ENCODE measurements at regions of chr19 and their contacts with region 1.

Region 1: DNA sequence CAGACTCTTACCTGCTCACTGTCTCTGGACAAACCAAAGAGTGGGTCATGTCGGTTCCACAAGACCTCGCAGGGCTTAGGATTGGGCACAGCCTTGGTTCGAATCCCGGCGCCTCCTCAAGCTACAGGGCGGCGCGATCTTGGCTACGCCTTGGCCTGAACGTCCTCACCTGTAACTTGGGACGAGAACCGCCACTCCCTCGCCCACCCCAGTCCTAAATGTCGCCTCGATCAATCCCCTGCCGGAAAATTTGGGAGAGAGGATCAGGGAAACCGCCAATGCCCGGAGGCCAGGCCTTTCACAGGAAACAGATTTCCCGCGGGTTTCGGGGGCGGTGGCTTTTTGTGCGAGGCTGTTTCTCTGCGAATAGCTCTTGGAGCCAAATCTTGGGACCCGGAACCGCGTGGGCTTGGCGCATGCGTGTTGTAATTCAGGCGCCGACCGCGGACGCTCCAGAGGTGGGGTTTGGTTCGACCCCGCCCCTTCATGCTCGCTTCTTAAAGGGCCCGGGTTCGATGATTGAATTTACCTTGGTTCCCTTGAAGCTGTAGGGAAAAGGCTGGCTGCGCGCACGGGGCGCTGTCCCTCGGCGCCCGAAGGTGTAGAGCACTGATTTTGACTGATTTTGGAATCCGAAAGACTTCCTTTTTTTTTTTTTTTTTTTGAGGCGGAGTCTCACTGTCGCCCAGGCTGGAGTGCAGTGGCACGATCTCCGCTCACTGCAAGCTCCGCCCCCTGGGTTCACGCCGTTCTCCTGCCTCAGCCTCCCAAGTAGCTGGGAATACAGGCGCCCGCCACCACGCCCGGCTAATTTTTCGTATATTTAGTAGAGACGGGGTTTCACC is at the start of gene NR2C2AP:
- DNase-seq: peak; percentile 94
- H3K4me3 Mint-ChIP-seq: peak within 1 kb of the TSS; percentile 96
- H3K27ac Mint-ChIP-seq: peak within 1 kb of the TSS; percentile 94
- H3K4me1 Mint-ChIP-seq: peaks cover 45% of the 10 kb centered on the region
- H3K27me3 Mint-ChIP-seq: no peaks in the 10 kb centered on the region
- total RNA-seq, gene NR2C2AP: 29.9 to 37.2 TPM

Region 2: GRCh38 chr19:19192078-19192882 is 11.0 kb before region 1 on chr19 and contains the starts of genes BORCS8 and RFXANK:
- CTCF ChIA-PET with region 1: interaction called, 4 read pairs
- POLR2A ChIA-PET with region 1: interaction called, 10 read pairs
- DNase-seq: peak; percentile 100
- H3K4me3 Mint-ChIP-seq: peak within 1 kb of the TSS; percentile 96
- H3K27ac Mint-ChIP-seq: peak within 1 kb of the TSS; percentile 100
- H3K4me1 Mint-ChIP-seq: peaks cover 41% of the 10 kb centered on the region
- H3K27me3 Mint-ChIP-seq: no peaks in the 10 kb centered on the region
- total RNA-seq, gene BORCS8: 34.2 to 35.8 TPM
- total RNA-seq, gene RFXANK: 82.5 to 104 TPM

Measured in activated CD4-positive, alpha-beta T cell treated with anti-CD3 and anti-CD28 coated beads, Interleukin-2, amount 10 ng/mL, durations not matched to agents 7 days and 5 days (primary cell).